PC-9 (cell line): ENCODE measurements at regions of chr9 and their contacts with region 1.

Region 1: GRCh38 chr9:114405294-114406034 is 17.7 kb upstream of the AKNA start:
- DNase-seq: peak; percentile 59 to 76
- H3K4me3 ChIP-seq: no peak overlapping the region
- H3K27ac ChIP-seq: no peak overlapping the region
- H3K4me1 ChIP-seq: no peaks in the 10 kb centered on the region
- H3K27me3 ChIP-seq: no peaks in the 10 kb centered on the region
- CTCF ChIP-seq: peak; percentile 82

Region 2: DNA sequence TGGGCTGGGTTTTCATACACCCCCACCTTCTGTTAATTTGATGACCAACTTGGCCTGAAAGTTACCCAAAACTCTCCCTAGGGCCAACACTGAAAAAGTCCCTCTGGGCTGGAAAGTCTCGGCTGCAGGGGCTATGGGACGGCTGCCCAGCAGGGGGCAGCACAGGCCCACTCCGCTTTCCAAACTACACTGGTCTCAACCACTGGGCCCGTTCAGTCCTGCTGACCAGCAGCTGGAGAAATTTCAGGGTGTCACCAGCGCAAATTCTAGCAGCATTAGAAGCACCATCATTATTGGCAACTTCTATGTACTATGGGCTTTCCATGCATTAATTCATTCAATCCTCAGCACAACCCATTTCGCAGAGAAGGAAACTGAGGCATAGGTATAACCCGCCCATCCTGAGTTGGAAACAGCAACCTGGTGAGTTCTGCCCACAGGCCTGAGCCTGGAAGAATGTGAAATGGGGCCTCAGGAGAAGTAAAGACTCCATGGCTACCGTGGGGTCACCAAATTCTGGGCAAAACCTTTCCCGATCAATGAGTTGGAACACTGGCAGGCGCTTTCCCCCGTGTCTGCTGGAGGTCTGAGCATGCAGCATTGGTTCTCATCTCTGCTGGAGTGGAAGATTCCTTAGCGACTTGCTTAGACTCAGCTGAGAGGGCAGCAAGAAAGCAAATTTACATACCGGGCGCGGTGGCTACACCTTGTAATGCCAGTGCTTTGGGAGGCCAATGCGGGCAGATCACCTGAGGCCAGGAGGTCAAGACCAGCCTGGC is 66.1 kb before region 1 on chr9:
- CTCF ChIA-PET with region 1: no interaction called
- POLR2A ChIA-PET with region 1: no interaction called
- intact Hi-C with region 1: loop called (anchors 2 kb)
- DNase-seq: peak in 1 of 2 experiments; percentile 57
- H3K4me3 ChIP-seq: no peak overlapping the region
- H3K27ac ChIP-seq: no peak overlapping the region
- H3K4me1 ChIP-seq: no peaks in the 10 kb centered on the region
- H3K27me3 ChIP-seq: no peaks in the 10 kb centered on the region
- CTCF ChIP-seq: peak; percentile 90

Region 3: GRCh38 chr9:114349713-114350480 is 55.6 kb before region 1 on chr9:
- CTCF ChIA-PET with region 1: no interaction called
- POLR2A ChIA-PET with region 1: no interaction called
- intact Hi-C with region 1: no loop called
- DNase-seq: no peak
- H3K4me3 ChIP-seq: no peak overlapping the region
- H3K27ac ChIP-seq: peak overlapping the region; percentile 83
- H3K4me1 ChIP-seq: peaks cover 15% of the 10 kb centered on the region
- H3K27me3 ChIP-seq: no peaks in the 10 kb centered on the region
- CTCF ChIP-seq: no peak

Region 4: GRCh38 chr9:114446036-114446435 is 40.6 kb after region 1 on chr9:
- CTCF ChIA-PET with region 1: no interaction called
- POLR2A ChIA-PET with region 1: no interaction called
- intact Hi-C with region 1: no loop called
- DNase-seq: peak in 1 of 2 experiments; percentile 52
- H3K4me3 ChIP-seq: no peak overlapping the region
- H3K27ac ChIP-seq: no peak overlapping the region
- H3K4me1 ChIP-seq: 0 out of 2 replicates have a peak, but pooled peaks cover 9% of the 10 kb centered on the region
- H3K27me3 ChIP-seq: no peaks in the 10 kb centered on the region
- CTCF ChIP-seq: no peak

Region 5: DNA sequence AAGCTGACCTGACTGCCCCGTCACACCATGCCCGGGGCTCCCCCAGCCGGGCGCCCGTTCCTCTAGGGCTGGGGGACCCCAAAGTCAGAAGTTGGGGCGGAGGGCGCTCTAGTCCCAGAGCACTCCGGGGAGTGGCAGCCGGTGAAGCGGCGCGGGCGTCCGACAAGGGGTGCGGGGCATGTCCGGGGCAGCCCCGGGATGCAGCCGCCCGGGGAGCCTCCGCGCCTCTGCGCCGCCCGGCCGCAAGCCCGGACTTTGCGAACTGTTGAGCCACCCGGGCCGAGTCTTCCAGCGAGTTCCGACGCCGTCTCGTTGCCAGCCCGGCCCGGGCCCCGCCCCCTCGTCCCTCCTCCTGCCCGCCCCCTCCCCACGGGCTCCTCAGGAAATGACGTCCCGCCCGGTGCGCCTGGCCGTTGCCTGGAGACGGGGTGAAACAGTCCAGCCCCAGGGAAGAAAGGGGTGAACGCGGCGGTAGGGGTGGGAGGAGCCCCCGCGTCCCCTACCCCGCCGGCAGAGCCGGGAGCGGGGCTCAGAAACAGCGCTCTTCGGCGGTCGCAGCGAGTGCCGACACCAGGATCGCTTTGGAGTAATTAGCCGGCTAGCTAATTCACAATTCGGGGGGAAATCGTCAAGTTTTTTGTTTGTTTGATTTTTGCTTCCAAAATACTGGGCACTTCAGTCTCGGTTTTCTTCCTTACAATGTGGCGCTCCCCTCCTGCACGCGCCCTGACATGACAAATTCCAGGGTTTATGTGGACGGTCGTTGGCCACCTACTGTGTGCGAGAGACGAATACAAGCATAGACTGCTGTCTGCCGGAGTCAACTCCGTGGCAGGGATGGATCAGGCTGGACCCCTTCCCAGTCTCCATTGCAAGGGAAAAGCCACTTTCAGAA is 100.0 kb after region 1 on chr9 and contains the start of gene WHRN:
- CTCF ChIA-PET with region 1: no interaction called
- POLR2A ChIA-PET with region 1: no interaction called
- intact Hi-C with region 1: loop called (anchors 1 kb)
- DNase-seq: peak; percentile 79 to 96
- H3K4me3 ChIP-seq: peak within 1 kb of the TSS; percentile 82
- H3K27ac ChIP-seq: no peak within 1 kb of the TSS
- H3K4me1 ChIP-seq: peaks cover 35% of the 10 kb centered on the region
- H3K27me3 ChIP-seq: peaks cover 9% of the 10 kb centered on the region; the same call in 1 of the 2 replicates
- CTCF ChIP-seq: no peak
- total RNA-seq, gene WHRN: 19.8 and 21.9 TPM in 2 replicates

Region 6: DNA sequence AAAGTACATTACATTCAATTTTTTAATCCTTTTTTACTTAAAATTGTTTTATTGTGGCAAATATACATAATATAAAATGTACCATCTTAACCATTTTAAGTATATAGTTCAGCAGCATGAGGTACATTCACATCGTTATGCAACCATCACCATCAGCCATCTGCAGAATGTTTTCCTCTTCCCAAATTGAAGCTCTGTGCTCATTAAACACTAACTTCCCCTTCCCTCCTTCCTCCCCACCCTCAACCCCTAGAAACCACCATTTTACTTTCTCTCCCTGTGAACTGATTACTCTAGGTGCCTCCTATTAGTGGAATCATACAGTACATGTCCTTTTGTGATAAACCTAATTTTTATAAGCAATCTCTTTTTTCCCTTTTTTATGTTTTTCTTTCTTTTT is 236.5 kb after region 1 on chr9:
- CTCF ChIA-PET with region 1: interaction called, 17 read pairs
- POLR2A ChIA-PET with region 1: no interaction called
- intact Hi-C with region 1: no loop called
- DNase-seq: no peak
- H3K4me3 ChIP-seq: no peak overlapping the region
- H3K27ac ChIP-seq: no peak overlapping the region
- H3K4me1 ChIP-seq: no peaks in the 10 kb centered on the region
- H3K27me3 ChIP-seq: no peaks in the 10 kb centered on the region
- CTCF ChIP-seq: no peak

Region 7: GRCh38 chr9:114738581-114739316 is 333.3 kb after region 1 on chr9:
- CTCF ChIA-PET with region 1: no interaction called
- POLR2A ChIA-PET with region 1: no interaction called
- intact Hi-C with region 1: loop called (anchors 1 kb)
- DNase-seq: peak; percentile 68 to 69
- H3K4me3 ChIP-seq: no peak overlapping the region
- H3K27ac ChIP-seq: no peak overlapping the region
- H3K4me1 ChIP-seq: peaks cover 19% of the 10 kb centered on the region
- H3K27me3 ChIP-seq: no peaks in the 10 kb centered on the region
- CTCF ChIP-seq: peak; percentile 92